Ovary (tissue), 10 donors: ENCODE measurements at regions of chr15 and their contacts with region 1.

Region 1: GRCh38 chr15:92808978-92809879 is 90.9 kb upstream of the CHD2 start:
- DNase-seq: peak; percentile 98 to 100 (median 99)
- H3K4me3 ChIP-seq: peak overlapping the region; percentile 57
- H3K27ac ChIP-seq: peak overlapping the region; percentile 94 to 99
- H3K4me1 ChIP-seq: peaks cover 8% of the 10 kb centered on the region
- H3K27me3 ChIP-seq: no peaks in the 10 kb centered on the region
- CTCF ChIP-seq: peak; percentile 98 to 100 (median 100)
- EP300 ChIP-seq: peak; percentile 4
- POLR2A ChIP-seq: peak; percentile 67

Region 2: GRCh38 chr15:92683232-92683834 is 125.9 kb before region 1 on chr15:
- intact Hi-C with region 1: no loop called
- DNase-seq: peak in 4 of 5 donors; percentile 42 to 75 (median 58)
- H3K4me3 ChIP-seq: no peak overlapping the region
- H3K27ac ChIP-seq: no peak overlapping the region
- H3K4me1 ChIP-seq: no peaks in the 10 kb centered on the region
- H3K27me3 ChIP-seq: no peaks in the 10 kb centered on the region
- CTCF ChIP-seq: peak; percentile 19 to 77 (median 53)
- EP300 ChIP-seq: no peak
- POLR2A ChIP-seq: peak; percentile 22

Region 3: DNA sequence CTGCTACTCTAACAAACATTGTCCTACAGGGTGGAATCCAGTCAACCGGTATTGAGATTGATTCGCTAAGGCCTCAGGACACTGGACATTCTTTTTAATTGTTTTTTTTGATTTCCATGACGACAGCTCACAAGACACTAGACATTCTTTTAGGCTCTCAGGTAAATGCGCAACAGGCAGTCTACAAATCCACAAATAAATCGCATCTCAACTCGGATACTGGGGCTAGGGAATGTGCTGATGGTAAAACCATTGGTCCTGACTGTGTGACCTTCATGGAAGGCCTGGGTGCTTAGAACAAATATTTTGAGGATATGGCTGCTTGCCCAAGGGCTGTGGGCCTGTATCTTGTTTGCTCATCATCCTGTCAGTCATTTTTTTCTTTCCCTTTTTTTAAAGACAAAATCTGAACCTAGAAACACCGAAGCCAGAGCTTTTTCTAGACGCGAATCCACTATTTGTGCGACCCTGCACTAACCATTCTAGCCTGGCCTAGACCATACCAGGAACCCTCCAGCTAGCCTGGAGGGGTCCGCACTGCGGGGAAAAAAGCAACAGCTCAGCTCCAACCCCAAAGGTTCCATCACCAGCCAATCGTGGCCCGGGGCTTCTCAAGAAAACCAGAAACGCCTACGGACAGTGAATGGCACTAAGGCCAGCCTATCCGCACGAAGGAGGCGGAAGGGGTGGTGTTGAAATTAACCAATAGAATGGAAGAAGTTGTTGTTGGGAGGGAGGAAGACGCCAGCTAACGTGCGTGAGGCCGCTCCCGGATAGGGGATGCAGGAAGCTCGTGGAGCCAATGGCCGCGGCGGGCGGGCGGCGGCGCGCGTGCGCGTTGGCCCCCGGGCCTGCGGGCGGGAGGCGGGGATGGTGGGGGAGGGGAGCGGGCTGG is 72.8 kb after region 1 on chr15:
- intact Hi-C with region 1: loop called (anchors 2 to 5 kb)
- DNase-seq: peak; percentile 98 to 100 (median 99)
- H3K4me3 ChIP-seq: peak overlapping the region; percentile 44
- H3K27ac ChIP-seq: peak overlapping the region; percentile 99 to 100
- H3K4me1 ChIP-seq: peaks cover 14% of the 10 kb centered on the region
- H3K27me3 ChIP-seq: no peaks in the 10 kb centered on the region
- CTCF ChIP-seq: peak in 1 of 3 donors; percentile 28
- EP300 ChIP-seq: no peak
- POLR2A ChIP-seq: peak; percentile 97

Region 4: DNA sequence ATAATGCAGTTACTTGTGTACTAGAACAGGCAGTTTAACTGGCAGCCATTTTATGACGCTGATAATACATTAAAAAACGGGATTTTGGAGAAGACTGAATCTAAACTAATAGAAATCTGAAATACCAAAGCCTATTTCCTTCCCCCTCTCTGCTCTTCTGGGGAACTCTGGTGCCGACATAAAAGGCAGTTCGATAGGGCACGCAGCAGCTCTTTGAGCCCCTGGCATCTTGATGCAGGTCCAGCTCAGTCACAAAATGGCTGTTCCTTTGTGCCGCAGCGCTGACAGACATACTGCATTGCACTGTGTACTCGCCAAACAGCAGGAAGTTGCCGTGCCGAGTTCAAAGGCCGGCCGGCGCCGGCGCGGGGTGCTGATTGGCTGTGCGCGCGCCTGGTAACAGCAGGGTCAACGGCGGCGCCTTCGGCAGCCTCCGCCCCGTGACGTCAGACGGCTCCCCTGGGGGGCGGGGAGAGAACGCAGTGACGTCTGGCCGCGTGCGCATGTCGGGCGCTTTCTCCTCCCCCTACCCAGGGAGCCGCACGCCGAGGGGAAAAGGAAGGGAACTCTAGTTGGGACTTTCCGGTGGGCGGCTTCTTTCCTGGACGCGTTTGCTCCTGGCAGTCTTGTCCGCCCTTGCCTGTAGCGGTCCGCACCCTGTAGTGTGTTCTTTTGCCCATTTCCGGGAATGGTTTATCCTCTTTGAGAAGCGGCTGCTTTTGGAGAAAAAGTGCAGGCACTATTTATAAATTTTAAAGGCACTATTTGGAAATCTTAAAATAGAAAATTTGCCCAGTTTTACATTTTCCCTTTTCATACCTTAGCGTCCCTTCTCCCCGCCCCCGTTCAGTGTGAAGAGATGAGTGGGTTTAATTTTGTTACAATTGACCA is 95.0 kb after region 1 on chr15:
- intact Hi-C with region 1: loop called in 2 of 4 experiments (anchors 5 kb)
- DNase-seq: peak; percentile 99 to 100 (median 99)
- H3K4me3 ChIP-seq: peak overlapping the region; percentile 71
- H3K27ac ChIP-seq: peak overlapping the region; percentile 69 to 83
- H3K4me1 ChIP-seq: peaks cover 9% of the 10 kb centered on the region
- H3K27me3 ChIP-seq: no peaks in the 10 kb centered on the region
- CTCF ChIP-seq: peak in 1 of 3 donors; percentile 6
- EP300 ChIP-seq: peak; percentile 97
- POLR2A ChIP-seq: peak; percentile 84

Region 5: GRCh38 chr15:92917606-92918407 is 108.6 kb after region 1 on chr15:
- intact Hi-C with region 1: loop called (anchors 2 to 10 kb)
- DNase-seq: peak; percentile 93 to 98 (median 96)
- H3K4me3 ChIP-seq: peak overlapping the region; percentile 5
- H3K27ac ChIP-seq: peak overlapping the region in 1 of 2 donors; percentile 75
- H3K4me1 ChIP-seq: peaks cover 16% of the 10 kb centered on the region
- H3K27me3 ChIP-seq: no peaks in the 10 kb centered on the region
- CTCF ChIP-seq: peak; percentile 89 to 98 (median 97)
- EP300 ChIP-seq: no peak
- POLR2A ChIP-seq: no peak

Region 6: DNA sequence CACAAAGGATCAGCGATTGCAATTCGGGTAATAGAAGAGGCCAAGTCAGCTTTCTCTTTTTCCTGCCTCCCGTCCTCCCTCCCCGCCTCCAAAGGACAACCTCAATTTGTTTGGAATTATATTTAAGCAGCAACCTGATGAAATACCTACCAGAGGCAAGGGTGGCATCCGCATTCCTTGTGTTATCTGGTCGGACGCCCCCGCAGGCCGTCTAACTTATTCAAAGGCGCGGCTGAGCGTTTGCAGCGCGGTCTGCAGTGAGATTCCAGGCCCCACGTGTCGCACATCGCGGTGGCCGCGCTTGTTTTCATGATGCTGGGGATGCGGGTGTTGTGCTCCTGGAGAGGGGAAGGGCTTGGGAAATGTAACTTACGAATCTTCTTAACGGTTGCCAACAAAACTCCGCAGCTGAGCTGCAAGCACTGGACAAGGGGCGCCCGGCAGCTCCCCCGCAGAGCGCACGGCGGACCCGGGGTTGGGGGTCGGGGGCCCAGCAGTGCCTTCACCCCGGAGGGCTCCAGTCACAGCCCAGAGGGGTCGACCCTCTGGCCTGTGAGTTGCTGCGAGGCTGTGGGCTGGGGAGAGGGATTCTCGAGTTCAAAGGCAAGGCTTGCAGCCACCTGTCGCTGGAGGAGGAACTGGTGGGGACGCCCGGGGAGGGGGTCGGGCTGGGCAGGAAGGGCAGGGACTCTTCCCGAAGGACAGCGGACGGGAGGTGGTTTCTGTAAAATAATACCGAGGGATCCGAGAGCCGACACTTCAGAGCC is 300.3 kb after region 1 on chr15:
- intact Hi-C with region 1: no loop called
- DNase-seq: no peak
- H3K4me3 ChIP-seq: no peak overlapping the region
- H3K27ac ChIP-seq: no peak overlapping the region
- H3K4me1 ChIP-seq: no peaks in the 10 kb centered on the region
- H3K27me3 ChIP-seq: no peaks in the 10 kb centered on the region
- CTCF ChIP-seq: no peak
- EP300 ChIP-seq: no peak
- POLR2A ChIP-seq: no peak